Right ventricle myocardium superior (tissue), 1 donor: ENCODE measurements at regions of chr17 and their contacts with region 1.

Region 1: DNA sequence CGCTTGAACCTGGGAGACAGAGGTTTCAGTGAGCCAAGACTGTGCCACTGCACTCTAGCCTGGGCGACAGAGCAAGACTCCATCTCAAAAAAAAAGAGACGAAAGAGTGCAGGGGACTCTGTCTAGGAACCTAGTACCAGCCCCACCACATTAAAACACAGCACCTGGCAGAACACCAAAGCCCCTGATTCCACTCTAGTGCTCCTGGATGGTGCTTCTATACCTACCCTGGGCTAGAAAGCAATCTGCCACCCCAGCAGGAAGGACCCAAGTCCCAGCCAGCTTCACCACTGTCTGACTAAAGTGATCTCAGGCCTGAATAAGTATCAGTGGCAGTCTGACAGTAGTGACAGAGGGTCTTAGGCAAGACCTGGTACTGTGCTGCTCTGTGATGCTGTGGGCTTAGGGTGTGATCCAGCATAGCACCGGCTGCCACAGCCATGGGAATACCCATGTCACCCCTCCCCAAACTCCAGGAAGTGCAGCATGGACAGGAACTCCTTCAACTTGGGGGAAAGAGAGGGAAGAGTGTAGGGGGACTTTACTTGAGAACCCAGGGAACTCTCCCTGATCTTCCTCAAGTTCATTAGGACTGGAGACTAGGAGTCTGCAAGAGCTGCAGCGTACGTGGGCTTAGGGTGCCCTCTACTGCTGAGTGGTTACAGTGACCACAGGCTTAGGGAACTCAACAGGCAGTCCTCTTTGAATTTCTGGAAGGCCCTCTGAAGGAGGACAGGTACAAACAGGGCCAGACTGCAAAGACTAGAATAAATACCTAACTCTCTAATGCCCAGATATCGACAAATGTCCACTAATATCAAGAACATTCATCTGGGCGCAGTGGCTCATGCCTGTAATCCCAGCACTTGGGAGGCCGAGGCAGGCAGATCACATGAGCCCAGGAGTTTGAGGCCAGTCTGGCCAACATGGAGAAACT is 30.0 kb upstream of the RNF43 start:
- DNase-seq: peak; percentile 69
- ATAC-seq: peak; percentile 85

Region 2: DNA sequence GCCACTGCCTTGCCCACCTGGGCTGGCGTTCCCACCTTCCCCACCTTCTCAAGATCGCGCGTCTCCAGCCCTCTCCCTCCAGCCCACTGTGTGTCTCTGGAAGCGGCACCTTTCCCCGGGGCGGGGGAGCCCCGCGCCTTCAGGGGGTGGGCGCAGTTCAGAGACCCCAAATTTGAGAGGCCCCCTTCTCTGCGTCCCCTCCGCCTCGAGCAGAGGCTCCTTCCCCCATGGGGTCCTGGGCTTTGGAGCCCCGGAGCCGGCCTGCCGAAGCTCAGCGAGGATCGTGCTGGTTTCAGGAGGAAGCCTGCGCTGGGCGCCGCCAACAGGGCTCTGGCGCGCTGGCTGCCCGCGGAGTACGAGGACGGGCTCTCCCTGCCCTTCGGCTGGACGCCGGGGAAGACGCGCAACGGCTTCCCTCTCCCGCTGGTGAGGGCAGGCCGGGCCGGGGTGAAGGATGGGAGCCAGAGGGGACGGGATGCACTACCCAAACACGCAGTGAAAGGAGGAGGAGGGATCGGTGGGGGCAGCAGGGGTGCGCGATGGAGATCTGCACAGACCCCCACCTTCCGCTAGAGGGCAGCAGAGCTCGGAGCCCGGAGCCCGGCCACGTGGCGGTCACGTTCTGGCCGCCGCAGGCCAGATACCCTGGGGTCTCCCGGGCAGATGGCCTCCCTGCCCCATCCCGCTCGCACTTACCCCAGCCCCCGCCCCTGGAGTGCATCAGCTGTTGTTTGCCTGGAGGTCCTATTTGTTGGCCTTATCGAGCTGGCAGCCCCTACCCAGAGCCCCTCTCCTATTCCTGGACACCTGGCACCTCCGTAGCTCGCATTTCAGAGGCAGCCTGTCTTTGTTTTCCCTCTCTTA is 197.8 kb before region 1 on chr17:
- intact Hi-C with region 1: loop called (anchors 10 kb)
- DNase-seq: peak; percentile 76
- ATAC-seq: peak; percentile 96

Region 3: GRCh38 chr17:58317421-58318064 is 129.8 kb before region 1 on chr17:
- intact Hi-C with region 1: loop called (anchors 5 kb)
- DNase-seq: peak; percentile 36
- ATAC-seq: peak; percentile 67

Region 4: GRCh38 chr17:58377093-58377601 is 70.2 kb before region 1 on chr17:
- intact Hi-C with region 1: no loop called
- DNase-seq: no peak
- ATAC-seq: no peak